ENCODE measurements at regions of chr7 and their contacts with region 1.

Region 1: DNA sequence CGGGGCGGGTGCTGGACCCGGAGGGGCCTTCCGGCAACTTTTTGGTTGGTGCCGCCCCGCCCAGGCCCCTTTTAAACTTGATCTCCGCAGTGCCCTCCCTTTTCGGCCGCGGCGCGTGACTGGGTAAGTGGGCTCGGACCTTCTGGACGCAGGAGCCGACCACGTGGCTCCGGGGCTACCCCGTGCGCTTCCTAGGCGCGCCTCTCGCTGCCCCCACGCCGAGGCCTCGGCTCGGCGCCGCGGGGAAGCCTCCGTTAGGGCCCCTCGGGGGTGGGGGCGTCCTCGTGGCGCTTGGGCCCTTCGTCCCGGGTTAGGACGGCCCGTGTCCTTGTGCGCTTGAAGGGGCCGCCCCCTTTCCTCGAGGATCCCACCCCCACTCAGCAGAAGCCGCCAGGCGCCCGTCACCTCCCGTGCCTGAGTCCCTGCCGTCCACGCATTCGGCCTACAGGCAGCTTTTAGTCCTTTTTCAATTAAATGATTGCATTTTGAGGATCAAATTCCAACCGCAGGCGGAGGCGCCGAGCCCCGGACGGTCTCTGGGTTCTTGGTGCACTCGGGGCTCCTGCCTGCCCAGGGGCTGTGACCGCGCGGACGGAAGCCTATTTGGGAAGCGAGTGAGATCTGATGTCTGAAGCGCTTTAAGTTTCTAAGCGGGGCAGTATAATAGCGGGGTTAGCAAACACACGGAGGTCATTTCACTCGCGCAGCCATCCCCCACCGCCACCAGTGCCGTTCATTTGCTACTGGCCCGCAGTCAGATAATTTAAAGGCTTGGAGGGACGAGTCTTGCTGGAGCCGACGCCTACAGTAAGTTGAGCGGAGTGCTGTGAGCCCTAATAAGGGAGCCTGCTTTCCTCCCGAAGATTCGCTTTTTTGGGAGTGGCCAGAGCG is 31.8 kb upstream of the TOMM7 start:
- DNase-seq: peak in 1 of 2 donors; percentile 94
- H3K4me3 ChIP-seq: peak overlapping the region; percentile 70 to 82
- H3K27ac ChIP-seq: peak overlapping the region; percentile 99
- H3K4me1 ChIP-seq: peaks cover 40% of the 10 kb centered on the region
- H3K27me3 ChIP-seq: no peaks in the 10 kb centered on the region
- CTCF ChIP-seq: peak in 2 of 3 experiments; percentile 17 to 35
- POLR2A ChIP-seq: no peak

Region 2: GRCh38 chr7:23013715-23014649 is 159.6 kb after region 1 on chr7 and contains the start of gene HYCC1:
- intact Hi-C with region 1: loop called (anchors 5 kb)
- DNase-seq: peak; percentile 99 to 100
- H3K4me3 ChIP-seq: peak within 1 kb of the TSS; percentile 88 to 95
- H3K27ac ChIP-seq: peak within 1 kb of the TSS; percentile 85
- H3K4me1 ChIP-seq: peaks cover 33% of the 10 kb centered on the region
- H3K27me3 ChIP-seq: no peaks in the 10 kb centered on the region
- CTCF ChIP-seq: peak; percentile 28 to 73 (median 47)
- POLR2A ChIP-seq: peak; percentile 98 to 99
- total RNA-seq, gene HYCC1: 23.6 TPM